CD14-positive monocyte (primary cell): ENCODE measurements at regions of chr20 and their contacts with region 1.

Region 1: GRCh38 chr20:13819885-13820645 is 35.2 kb downstream of the NDUFAF5 start:
- DNase-seq: peak; percentile 24 to 52 (median 51)
- H3K4me3 ChIP-seq: no peak overlapping the region
- H3K4me3 Mint-ChIP-seq: no peak overlapping the region
- H3K27ac ChIP-seq: no peak overlapping the region
- H3K27ac Mint-ChIP-seq: no peak overlapping the region
- H3K4me1 ChIP-seq: peaks cover 11 to 13% of the 10 kb centered on the region in 2 donors
- H3K4me1 Mint-ChIP-seq: peaks cover 17% of the 10 kb centered on the region
- H3K27me3 ChIP-seq: no peaks in the 10 kb centered on the region
- H3K27me3 Mint-ChIP-seq: peaks cover 0 to 5% (median 0%) of the 10 kb centered on the region in 3 donors
- CTCF ChIP-seq: peak; percentile 85

Region 2: DNA sequence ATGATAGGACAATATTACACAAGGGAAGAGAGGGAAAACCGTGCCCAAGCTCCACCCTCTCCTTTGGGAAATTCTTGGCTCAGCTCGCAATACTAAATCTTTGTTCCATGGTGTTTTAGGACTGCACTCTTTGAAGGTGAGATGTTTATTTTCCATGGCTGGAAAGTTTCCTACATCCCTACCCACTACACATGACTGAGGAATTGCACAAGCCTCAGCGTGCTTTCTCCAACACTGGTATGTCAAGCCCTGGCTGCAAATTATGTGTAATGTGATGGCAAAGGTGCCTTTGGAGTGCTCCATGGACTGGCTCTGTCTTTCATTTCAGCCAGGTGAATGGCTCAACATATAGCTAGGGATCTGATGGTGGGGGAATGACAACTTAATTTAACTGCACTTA is 464.7 kb before region 1 on chr20:
- intact Hi-C with region 1: no loop called
- DNase-seq: no peak
- H3K4me3 ChIP-seq: no peak overlapping the region
- H3K4me3 Mint-ChIP-seq: no peak overlapping the region
- H3K27ac ChIP-seq: no peak overlapping the region
- H3K27ac Mint-ChIP-seq: no peak overlapping the region
- H3K4me1 ChIP-seq: no peaks in the 10 kb centered on the region
- H3K4me1 Mint-ChIP-seq: no peaks in the 10 kb centered on the region
- H3K27me3 ChIP-seq: no peaks in the 10 kb centered on the region
- H3K27me3 Mint-ChIP-seq: peaks cover 1 to 3% (median 2%) of the 10 kb centered on the region in 3 donors
- CTCF ChIP-seq: no peak

Region 3: GRCh38 chr20:13800728-13801134 is 19.3 kb before region 1 on chr20:
- intact Hi-C with region 1: no loop called
- DNase-seq: no peak
- H3K4me3 ChIP-seq: no peak overlapping the region
- H3K4me3 Mint-ChIP-seq: no peak overlapping the region
- H3K27ac ChIP-seq: no peak overlapping the region
- H3K27ac Mint-ChIP-seq: no peak overlapping the region
- H3K4me1 ChIP-seq: no peaks in the 10 kb centered on the region
- H3K4me1 Mint-ChIP-seq: no peaks in the 10 kb centered on the region
- H3K27me3 ChIP-seq: no peaks in the 10 kb centered on the region
- H3K27me3 Mint-ChIP-seq: no peaks in the 10 kb centered on the region
- CTCF ChIP-seq: no peak

Region 4: GRCh38 chr20:13984211-13984610 is 164.1 kb after region 1 on chr20:
- intact Hi-C with region 1: no loop called
- DNase-seq: no peak
- H3K4me3 ChIP-seq: no peak overlapping the region
- H3K4me3 Mint-ChIP-seq: no peak overlapping the region
- H3K27ac ChIP-seq: no peak overlapping the region
- H3K27ac Mint-ChIP-seq: no peak overlapping the region
- H3K4me1 ChIP-seq: no peaks in the 10 kb centered on the region
- H3K4me1 Mint-ChIP-seq: no peaks in the 10 kb centered on the region
- H3K27me3 ChIP-seq: no peaks in the 10 kb centered on the region
- H3K27me3 Mint-ChIP-seq: peaks cover 4 to 5% (median 4%) of the 10 kb centered on the region in 3 donors
- CTCF ChIP-seq: no peak

Region 5: DNA sequence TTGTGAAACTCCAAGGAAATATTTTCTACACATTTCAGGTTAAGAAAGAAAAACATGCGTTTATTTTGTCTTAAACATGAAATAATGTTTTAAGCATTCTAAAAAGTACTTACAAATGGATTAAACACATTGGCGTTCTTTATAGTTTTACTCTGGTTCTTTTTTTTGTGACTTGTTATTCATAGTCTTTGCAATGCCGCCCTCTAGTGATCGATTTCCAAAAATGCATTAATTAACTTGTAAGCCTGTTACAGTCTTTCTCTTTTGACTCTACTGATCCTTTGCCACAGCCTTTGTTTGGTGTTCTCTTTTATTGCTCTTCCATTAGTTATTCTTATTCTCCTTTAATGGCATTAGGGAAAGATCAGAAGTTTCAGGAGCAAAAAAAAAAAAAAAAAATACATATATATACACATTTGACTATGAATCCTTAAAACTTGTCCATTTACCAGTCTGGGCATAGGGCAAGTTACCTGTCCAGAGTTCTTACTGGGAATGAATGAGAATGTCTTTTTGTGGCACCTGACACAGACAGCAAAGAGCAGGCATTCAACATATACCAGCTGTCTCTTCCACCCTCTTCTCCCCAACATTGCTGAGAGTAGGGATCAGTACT is 235.2 kb after region 1 on chr20:
- intact Hi-C with region 1: loop called (anchors 2 to 5 kb)
- DNase-seq: peak; percentile 7 to 46 (median 31)
- H3K4me3 ChIP-seq: no peak overlapping the region
- H3K4me3 Mint-ChIP-seq: no peak overlapping the region
- H3K27ac ChIP-seq: no peak overlapping the region
- H3K27ac Mint-ChIP-seq: no peak overlapping the region
- H3K4me1 ChIP-seq: no peaks in the 10 kb centered on the region
- H3K4me1 Mint-ChIP-seq: no peaks in the 10 kb centered on the region
- H3K27me3 ChIP-seq: no peaks in the 10 kb centered on the region
- H3K27me3 Mint-ChIP-seq: peaks cover 0 to 5% (median 4%) of the 10 kb centered on the region in 3 donors
- CTCF ChIP-seq: peak; percentile 81

Region 6: GRCh38 chr20:14142171-14142570 is 322.1 kb after region 1 on chr20:
- intact Hi-C with region 1: no loop called
- DNase-seq: no peak
- H3K4me3 ChIP-seq: no peak overlapping the region
- H3K4me3 Mint-ChIP-seq: no peak overlapping the region
- H3K27ac ChIP-seq: no peak overlapping the region
- H3K27ac Mint-ChIP-seq: no peak overlapping the region
- H3K4me1 ChIP-seq: no peaks in the 10 kb centered on the region
- H3K4me1 Mint-ChIP-seq: no peaks in the 10 kb centered on the region
- H3K27me3 ChIP-seq: no peaks in the 10 kb centered on the region
- H3K27me3 Mint-ChIP-seq: peaks cover 0 to 2% (median 0%) of the 10 kb centered on the region in 3 donors
- CTCF ChIP-seq: no peak